Prostate gland (tissue), 2 donors: ENCODE measurements at regions of chr9 and their contacts with region 1.

Region 1: DNA sequence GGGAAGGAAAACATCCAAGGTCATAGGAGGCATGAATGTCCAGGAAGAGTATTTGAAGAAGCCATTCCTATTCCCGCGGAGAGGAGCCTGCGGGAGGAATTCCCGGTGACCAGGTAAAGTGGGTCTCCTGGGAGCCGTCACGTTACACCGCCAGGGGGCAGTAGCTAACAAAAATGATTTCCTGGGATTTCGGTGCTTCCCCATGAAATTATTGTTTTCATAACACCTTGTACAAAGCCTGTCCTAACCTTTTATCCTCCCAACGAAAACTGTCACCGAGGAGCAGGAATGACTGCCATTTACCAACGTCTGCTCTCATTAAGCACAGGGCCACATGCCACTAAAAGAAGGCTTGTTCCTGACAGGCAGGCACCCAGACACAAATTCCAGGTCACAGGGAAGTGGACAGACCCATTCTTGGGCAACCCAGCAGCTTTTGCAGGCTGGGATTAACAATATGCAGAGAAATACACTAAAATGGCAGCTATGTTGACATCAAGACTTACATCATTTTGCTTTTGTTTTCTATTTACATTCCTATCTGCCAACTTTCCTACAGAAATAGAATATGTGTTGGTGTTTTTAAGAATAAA is 41.2 kb upstream of the CTSL start:
- DNase-seq: peak; percentile 62
- H3K4me3 ChIP-seq: no peak overlapping the region
- H3K27ac ChIP-seq: no peak overlapping the region
- H3K4me1 ChIP-seq: no peaks in the 10 kb centered on the region
- H3K27me3 ChIP-seq: no peaks in the 10 kb centered on the region
- CTCF ChIP-seq: peak; percentile 59 to 90 (median 77)
- POLR2A ChIP-seq: no peak

Region 2: GRCh38 chr9:87812375-87813118 is 127.8 kb after region 1 on chr9:
- intact Hi-C with region 1: loop called (anchors 5 kb)
- DNase-seq: peak; percentile 21
- H3K4me3 ChIP-seq: no peak overlapping the region
- H3K27ac ChIP-seq: no peak overlapping the region
- H3K4me1 ChIP-seq: no peaks in the 10 kb centered on the region
- H3K27me3 ChIP-seq: no peaks in the 10 kb centered on the region
- CTCF ChIP-seq: peak; percentile 46 to 85 (median 74)
- POLR2A ChIP-seq: no peak

Region 3: DNA sequence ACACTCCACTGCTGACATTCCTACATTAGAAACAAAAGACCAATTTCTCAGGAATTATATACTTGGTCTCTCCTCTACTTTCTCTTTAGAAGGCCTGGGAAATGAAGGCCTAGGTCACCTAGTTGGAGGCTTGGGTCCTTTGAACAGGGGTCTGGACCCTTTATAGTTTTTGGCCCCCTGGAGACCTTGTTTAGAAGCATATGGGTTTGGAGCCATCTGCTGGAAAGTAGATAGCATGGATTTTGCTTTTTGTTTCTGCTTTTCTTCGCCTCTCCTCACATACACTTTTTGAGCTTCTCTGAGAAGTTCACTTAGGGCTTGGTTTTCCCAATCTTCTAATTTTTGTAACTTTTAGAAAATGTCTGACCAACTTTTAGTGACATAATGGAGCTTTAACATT is 356.7 kb after region 1 on chr9:
- intact Hi-C with region 1: loop called (anchors 10 kb)
- DNase-seq: no peak
- H3K4me3 ChIP-seq: no peak overlapping the region
- H3K27ac ChIP-seq: no peak overlapping the region
- H3K4me1 ChIP-seq: no peaks in the 10 kb centered on the region
- H3K27me3 ChIP-seq: no peaks in the 10 kb centered on the region
- CTCF ChIP-seq: peak in 2 of 4 experiments; percentile 20 to 23
- POLR2A ChIP-seq: no peak